A673 (cell line): ENCODE measurements at regions of chr1 and their contacts with region 1.

Region 1: DNA sequence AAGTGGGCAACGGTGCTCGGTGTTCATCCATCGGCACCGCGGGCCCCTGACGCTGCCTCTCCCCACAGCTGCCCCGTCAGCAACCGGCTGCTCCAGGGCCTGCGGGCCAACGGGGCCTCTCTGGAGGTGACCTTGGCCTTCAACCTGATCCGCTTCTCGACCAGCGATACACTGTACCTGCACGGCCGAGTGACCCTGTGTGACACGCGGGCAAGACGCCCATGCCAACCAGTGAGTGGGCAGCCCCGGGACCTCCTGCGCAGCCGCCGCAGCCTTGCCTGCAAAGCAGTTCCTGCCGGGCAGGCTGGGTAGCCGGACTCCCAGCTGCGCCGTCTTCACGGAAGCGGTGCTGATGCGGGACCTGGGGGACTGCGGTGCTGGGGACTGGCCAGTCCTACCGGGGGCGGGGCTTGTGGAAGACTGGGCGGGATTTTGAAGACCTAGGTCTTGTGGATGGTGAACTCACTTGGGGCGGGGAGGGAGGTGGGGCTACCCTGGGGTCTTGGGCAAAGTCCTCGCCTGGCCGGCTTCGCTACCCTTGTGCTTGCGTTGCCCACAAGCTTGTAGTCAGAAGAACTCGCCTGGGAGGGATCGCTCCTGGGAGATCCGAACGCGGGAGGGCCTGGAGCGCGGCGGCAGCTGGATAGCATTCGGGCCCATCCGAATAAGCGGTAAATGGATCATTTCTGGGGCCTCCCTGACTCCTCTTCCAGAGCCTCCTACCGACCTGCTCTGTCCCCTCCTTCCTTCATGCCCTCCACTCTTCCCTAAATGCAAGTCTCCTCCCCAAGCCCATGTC is 8.8 kb upstream of the CEP85 start:
- DNase-seq: peak; percentile 11
- H3K4me3 ChIP-seq: peak overlapping the region; percentile 6
- H3K27ac ChIP-seq: no peak overlapping the region
- H3K4me1 ChIP-seq: no peaks in the 10 kb centered on the region
- H3K27me3 ChIP-seq: peaks cover 4% of the 10 kb centered on the region
- CTCF ChIP-seq: no peak

Region 2: DNA sequence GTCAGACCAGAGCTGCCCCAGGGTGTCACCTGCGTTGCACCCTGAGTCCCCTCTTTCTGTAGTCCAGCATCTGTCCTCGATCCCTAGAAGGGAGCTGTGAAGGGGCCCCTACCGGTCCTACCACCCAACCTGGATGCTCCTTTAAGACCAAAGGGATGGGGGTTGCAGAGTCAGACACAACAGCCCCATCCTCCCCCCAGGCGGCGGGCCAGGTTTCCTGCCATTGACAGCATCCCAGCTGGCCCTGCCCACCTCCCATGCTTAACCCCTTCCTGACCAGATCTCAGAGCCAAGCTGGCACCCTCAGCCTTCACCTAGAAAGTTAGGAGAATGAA is 68.6 kb before region 1 on chr1:
- CTCF ChIA-PET with region 1: no interaction called
- POLR2A ChIA-PET with region 1: no interaction called
- intact Hi-C with region 1: no loop called
- DNase-seq: peak; percentile 64
- H3K4me3 ChIP-seq: no peak overlapping the region
- H3K27ac ChIP-seq: no peak overlapping the region
- H3K4me1 ChIP-seq: peaks cover 31% of the 10 kb centered on the region
- H3K27me3 ChIP-seq: no peaks in the 10 kb centered on the region
- CTCF ChIP-seq: no peak

Region 3: GRCh38 chr1:26184883-26185282 is 40.3 kb before region 1 on chr1:
- CTCF ChIA-PET with region 1: no interaction called
- POLR2A ChIA-PET with region 1: interaction called, 14 read pairs
- intact Hi-C with region 1: no loop called
- DNase-seq: no peak
- H3K4me3 ChIP-seq: no peak overlapping the region
- H3K27ac ChIP-seq: no peak overlapping the region
- H3K4me1 ChIP-seq: no peaks in the 10 kb centered on the region
- H3K27me3 ChIP-seq: no peaks in the 10 kb centered on the region
- CTCF ChIP-seq: no peak